Activated naive CD8-positive, alpha-beta T cell treated with anti-CD3 and anti-CD28 coated beads, Interleukin-2, amount 10 ng/mL, durations not matched to agents 7 days and 5 days (primary cell): ENCODE measurements at regions of chr11 and their contacts with region 1.

Region 1: DNA sequence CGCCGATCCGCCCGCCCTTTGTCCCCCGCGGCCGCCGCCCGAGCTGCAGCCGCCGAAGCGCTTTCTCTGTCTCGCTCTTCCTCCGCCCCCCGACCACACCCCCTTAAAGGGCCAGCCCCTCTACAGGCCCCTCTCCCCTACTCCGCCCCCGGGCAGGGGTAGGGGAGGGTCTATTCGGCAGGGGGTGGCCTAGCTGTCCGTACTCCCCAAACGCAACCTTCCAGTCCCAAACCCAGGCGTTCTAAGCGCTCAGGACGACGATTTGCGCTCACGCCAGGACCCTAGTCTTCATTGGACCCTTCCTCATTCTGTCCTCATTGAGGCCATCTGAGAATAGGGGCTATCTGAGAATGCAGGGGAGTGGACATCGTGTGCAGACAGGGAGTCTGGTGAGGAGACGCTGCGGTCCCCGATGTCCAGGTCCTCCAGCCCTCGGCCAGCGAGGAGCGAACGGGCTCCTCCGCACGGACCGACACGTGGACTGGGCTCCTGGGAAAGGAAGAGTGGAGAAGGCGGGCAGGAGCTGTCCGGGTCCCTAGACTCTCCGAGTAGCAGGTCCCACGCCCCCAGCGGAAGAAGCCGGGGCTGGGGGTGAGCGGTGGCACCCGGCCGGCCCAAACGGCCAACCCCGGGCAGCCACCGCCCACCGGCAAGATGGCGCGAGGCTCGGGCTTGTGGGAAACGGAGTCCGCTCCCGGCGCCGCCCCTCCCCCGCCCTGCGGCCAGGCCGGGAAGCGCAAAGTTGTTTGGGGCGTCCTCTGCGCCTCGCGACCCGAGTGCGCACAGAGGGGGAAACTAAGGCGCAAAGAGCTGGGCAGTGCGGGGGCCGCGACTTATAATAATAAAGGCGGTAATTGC is at the start of gene PPP1R14B:
- DNase-seq: peak; percentile 88
- ATAC-seq: peak; percentile 51
- H3K4me3 Mint-ChIP-seq: peak within 1 kb of the TSS; percentile 93
- H3K27ac Mint-ChIP-seq: peak within 1 kb of the TSS; percentile 90
- H3K4me1 Mint-ChIP-seq: peaks cover 23% of the 10 kb centered on the region
- H3K27me3 Mint-ChIP-seq: peaks cover 2% of the 10 kb centered on the region
- total RNA-seq, gene PPP1R14B: 122 to 124 TPM

Region 2: DNA sequence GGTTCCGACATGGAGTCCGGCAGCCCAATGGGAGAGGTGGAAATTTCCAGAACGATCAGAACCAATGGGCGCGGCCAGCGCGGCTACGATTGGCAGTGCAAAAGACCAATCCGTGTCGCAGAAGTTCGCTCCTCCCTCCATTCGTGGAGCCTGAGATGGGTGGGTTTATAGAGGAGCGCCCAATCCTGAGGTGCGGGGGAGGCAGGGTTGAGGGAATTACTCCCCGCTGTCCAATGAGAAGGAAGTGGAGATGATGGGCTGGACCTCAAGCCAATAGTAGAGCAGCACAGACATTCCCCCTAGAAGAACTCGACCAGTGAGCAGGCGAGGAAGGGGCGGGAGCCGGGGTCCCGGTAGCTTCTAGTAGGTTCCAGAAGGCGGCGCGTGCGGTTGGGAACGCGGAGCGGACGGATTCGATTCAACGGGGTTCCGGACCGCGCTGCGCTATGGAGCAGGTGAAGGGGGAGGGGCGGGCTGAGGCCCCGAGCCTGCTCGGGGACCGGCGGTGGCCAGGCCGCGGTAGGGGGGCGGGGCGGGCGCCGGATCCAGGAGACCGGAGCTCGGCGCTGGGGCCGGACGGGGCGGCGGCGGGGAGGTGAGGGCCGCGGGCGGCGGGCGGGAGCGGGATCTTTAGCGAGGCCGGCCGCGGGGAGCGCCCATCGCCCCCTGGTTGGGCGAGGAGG is 61.1 kb before region 1 on chr11 and contains the start of gene STIP1:
- POLR2A ChIA-PET with region 1: interaction called, 27 read pairs
- DNase-seq: peak; percentile 95
- ATAC-seq: peak; percentile 92
- H3K4me3 Mint-ChIP-seq: peak within 1 kb of the TSS; percentile 99
- H3K27ac Mint-ChIP-seq: peak within 1 kb of the TSS; percentile 100
- H3K4me1 Mint-ChIP-seq: peaks cover 38% of the 10 kb centered on the region
- H3K27me3 Mint-ChIP-seq: no peaks in the 10 kb centered on the region
- total RNA-seq, gene STIP1: 218 to 219 TPM

Region 3: GRCh38 chr11:64204464-64204989 is 42.6 kb before region 1 on chr11:
- POLR2A ChIA-PET with region 1: interaction called, 106 read pairs
- DNase-seq: peak; percentile 76
- ATAC-seq: peak; percentile 39
- H3K4me3 Mint-ChIP-seq: peak overlapping the region; percentile 67
- H3K27ac Mint-ChIP-seq: peak overlapping the region; percentile 87
- H3K4me1 Mint-ChIP-seq: peaks cover 34% of the 10 kb centered on the region
- H3K27me3 Mint-ChIP-seq: no peaks in the 10 kb centered on the region

Region 4: GRCh38 chr11:64225612-64226506 is 21.2 kb before region 1 on chr11 and contains the starts of genes NUDT22 and TRPT1:
- POLR2A ChIA-PET with region 1: interaction called, 38 read pairs
- DNase-seq: peak; percentile 98
- ATAC-seq: peak; percentile 48
- H3K4me3 Mint-ChIP-seq: peak within 1 kb of the TSS; percentile 92
- H3K27ac Mint-ChIP-seq: peak within 1 kb of the TSS; percentile 88
- H3K4me1 Mint-ChIP-seq: peaks cover 24% of the 10 kb centered on the region
- H3K27me3 Mint-ChIP-seq: no peaks in the 10 kb centered on the region
- total RNA-seq, gene NUDT22: 102 to 103 TPM
- total RNA-seq, gene TRPT1: 45.0 to 47.8 TPM

Region 5: GRCh38 chr11:64233913-64234834 is 12.9 kb before region 1 on chr11 and contains the start of gene VEGFB:
- POLR2A ChIA-PET with region 1: interaction called, 27 read pairs
- DNase-seq: peak; percentile 85
- ATAC-seq: peak; percentile 42
- H3K4me3 Mint-ChIP-seq: peak within 1 kb of the TSS; percentile 93
- H3K27ac Mint-ChIP-seq: peak within 1 kb of the TSS; percentile 83
- H3K4me1 Mint-ChIP-seq: peaks cover 31% of the 10 kb centered on the region
- H3K27me3 Mint-ChIP-seq: no peaks in the 10 kb centered on the region
- total RNA-seq, gene VEGFB: 93.4 to 98.8 TPM

Region 6: DNA sequence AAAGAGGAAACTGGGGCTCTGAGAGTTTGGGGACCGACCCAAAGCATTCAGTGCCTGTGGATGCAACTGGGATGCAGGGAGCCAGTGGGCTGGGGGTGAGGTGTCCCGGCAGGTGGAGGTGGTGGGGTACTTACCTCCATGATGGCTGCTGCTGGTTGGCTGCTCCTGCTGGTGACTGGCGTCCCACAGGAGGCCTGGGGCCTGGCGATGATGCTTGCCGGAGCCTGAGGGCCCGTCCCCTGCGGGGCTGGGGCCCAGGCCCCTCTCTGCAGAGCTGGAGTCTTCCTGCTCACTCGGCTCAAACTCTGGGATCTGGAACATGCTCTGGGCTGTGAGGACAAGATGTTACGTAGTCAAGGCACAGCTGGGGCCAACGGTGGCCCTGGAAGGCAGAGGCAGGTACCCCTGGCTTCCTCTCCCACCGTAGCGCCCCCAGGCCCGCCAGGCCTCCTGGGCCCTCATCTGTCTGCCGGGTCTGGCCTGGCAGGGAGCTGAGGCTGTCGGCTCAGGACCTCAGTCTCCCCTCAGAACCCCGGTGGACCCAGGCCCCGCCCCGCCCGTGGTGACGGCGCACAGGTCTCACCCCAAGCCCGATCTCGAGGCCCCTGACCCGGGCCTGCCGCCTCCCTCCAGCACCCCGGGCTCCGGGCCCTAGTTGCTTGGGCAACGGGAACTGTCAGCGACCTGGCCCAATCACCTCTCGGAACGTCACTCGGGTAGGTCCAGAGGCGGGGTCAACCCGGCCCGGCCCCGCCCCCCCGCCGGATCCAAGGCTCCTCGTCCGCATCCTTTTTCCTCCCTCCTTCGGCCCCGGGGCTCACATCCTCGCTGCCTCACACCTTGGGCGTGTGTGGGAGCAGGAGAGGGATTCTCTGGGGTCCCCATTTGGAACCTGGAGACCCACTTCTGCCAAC is 37.2 kb after region 1 on chr11 and contains the start of gene BAD:
- POLR2A ChIA-PET with region 1: interaction called, 11 read pairs
- DNase-seq: peak; percentile 89
- ATAC-seq: peak; percentile 84
- H3K4me3 Mint-ChIP-seq: peak within 1 kb of the TSS; percentile 85
- H3K27ac Mint-ChIP-seq: peak within 1 kb of the TSS; percentile 86
- H3K4me1 Mint-ChIP-seq: peaks cover 8% of the 10 kb centered on the region
- H3K27me3 Mint-ChIP-seq: no peaks in the 10 kb centered on the region
- total RNA-seq, gene BAD: 32.9 to 35.8 TPM